Activated CD4-positive, alpha-beta T cell treated with anti-CD3 and anti-CD28 coated beads, Interleukin-2, amount 10 ng/mL, durations not matched to agents 24 days and 14 days (primary cell): ENCODE measurements at regions of chr11 and their contacts with region 1.

Region 1: DNA sequence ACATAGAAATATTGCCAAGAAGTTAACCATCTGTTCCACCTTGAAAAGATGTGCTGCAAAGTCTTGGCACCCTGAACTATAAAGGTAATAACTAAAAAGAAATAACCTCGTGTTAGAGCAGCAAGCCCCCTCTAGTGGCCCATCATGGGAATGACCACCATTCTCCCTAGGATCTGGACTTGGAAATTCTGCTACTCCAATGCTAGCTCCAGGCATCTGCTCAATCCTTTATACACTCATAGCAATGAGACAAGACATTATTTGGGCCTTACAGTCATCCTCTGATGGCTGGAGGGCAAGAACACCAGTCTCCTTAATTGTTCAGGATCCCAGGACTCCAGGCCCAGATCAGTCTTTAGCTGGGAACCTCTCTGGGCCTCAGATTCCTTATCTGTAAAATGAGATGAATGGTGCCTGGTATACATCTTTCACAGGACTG is 76.0 kb downstream of the CWC15 start:
- DNase-seq: peak; percentile 78
- H3K4me3 Mint-ChIP-seq: no peak overlapping the region
- H3K27ac Mint-ChIP-seq: no peak overlapping the region
- H3K4me1 Mint-ChIP-seq: no peaks in the 10 kb centered on the region
- H3K27me3 Mint-ChIP-seq: peaks cover 2% of the 10 kb centered on the region

Region 2: DNA sequence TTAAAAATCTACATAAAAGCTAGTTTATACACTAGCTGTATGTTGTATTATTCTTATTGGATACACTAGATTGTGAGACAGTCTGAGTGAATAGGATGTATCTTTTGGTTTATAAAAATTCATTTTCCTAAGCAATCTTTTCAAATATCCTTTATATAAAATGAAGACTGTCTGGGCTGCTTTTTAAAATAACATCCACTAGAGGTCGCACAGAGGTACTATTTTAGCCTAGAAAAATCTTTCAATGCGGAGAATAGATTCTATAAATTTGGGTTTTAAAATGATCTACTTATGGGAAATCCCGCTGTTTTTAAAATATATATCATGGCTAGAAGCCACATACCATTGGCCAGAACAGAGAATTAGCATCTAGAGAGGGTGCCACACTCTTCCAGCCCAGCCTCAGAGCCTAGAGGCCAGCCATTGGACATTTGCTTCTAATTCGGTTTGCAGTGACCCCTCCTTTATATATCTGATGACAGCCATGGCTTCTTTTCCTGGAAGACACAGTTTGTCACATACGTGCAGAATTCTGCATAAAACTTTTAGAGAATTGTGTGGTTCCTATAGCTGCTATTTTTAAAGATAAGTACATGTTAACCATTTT is 377.8 kb before region 1 on chr11:
- intact Hi-C with region 1: loop called (anchors 1 kb)
- DNase-seq: peak; percentile 67
- H3K4me3 Mint-ChIP-seq: no peak overlapping the region
- H3K27ac Mint-ChIP-seq: no peak overlapping the region
- H3K4me1 Mint-ChIP-seq: no peaks in the 10 kb centered on the region
- H3K27me3 Mint-ChIP-seq: peaks cover 31% of the 10 kb centered on the region

Region 3: DNA sequence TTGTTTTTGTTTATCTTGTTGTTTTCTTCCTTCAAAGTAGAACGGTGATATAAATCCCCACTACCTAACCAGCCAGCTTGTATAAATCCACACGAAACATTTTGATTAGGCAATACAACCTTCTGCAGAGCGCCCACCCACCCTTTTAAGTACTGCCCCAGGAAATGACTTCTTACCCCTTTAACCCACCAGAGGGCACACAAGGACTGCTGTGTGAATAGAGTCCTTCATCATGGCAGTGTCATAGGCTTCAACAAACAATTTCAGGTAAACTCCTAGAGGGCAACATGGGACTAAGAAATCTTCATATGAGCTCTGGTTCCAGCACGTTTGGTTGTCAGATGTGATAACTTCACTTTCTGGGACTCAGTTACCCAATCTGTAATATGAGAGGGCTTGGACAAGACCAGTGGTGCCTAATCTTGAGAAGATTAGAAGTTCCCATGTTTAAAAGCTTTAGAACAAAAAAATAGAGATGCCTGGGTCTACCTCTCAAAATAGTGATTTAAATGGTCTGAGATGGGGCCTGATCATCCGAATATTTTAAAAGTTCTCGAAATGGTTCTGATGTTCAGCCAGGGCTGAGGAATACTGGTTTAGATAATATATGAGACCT is 274.1 kb before region 1 on chr11:
- intact Hi-C with region 1: loop called (anchors 1 kb)
- DNase-seq: peak; percentile 86
- H3K4me3 Mint-ChIP-seq: no peak overlapping the region
- H3K27ac Mint-ChIP-seq: no peak overlapping the region
- H3K4me1 Mint-ChIP-seq: no peaks in the 10 kb centered on the region
- H3K27me3 Mint-ChIP-seq: peaks cover 3% of the 10 kb centered on the region

Region 4: DNA sequence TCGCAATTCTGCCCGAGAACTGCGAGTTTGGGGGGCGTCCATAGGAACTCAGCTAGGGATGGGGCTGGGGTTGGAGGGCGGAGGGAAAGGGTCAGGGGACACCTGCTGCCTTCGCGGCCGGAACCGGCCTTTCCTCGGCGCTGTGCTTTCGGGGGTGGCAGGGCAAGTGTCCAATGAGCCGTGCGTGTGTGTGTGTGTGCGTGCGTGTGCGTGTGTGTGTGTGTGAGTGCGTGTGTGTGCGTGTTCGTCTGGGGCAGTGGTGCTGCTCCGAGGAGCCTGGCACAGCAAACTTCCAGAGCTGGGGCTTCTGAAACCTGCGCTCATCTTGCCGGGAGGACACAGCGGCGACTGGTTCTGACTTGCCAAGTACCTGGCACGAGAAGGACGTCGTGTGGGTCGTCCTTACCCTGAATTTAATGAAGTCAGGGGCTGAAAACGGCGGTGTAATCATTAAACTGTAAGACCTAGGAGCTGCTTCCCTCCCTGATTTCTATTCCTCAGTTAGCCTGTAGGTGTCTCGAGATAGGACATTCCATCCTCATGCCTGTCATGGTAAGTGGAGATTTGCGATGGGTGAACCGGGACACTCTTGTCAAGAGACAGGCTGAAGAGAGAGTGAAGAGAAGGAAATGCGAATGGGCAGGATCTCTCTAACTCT is 156.2 kb before region 1 on chr11:
- intact Hi-C with region 1: loop called (anchors 5 kb)
- DNase-seq: peak; percentile 57
- H3K4me3 Mint-ChIP-seq: peak overlapping the region; percentile 79
- H3K27ac Mint-ChIP-seq: no peak overlapping the region
- H3K4me1 Mint-ChIP-seq: peaks cover 12% of the 10 kb centered on the region
- H3K27me3 Mint-ChIP-seq: peaks cover 37% of the 10 kb centered on the region

Region 5: DNA sequence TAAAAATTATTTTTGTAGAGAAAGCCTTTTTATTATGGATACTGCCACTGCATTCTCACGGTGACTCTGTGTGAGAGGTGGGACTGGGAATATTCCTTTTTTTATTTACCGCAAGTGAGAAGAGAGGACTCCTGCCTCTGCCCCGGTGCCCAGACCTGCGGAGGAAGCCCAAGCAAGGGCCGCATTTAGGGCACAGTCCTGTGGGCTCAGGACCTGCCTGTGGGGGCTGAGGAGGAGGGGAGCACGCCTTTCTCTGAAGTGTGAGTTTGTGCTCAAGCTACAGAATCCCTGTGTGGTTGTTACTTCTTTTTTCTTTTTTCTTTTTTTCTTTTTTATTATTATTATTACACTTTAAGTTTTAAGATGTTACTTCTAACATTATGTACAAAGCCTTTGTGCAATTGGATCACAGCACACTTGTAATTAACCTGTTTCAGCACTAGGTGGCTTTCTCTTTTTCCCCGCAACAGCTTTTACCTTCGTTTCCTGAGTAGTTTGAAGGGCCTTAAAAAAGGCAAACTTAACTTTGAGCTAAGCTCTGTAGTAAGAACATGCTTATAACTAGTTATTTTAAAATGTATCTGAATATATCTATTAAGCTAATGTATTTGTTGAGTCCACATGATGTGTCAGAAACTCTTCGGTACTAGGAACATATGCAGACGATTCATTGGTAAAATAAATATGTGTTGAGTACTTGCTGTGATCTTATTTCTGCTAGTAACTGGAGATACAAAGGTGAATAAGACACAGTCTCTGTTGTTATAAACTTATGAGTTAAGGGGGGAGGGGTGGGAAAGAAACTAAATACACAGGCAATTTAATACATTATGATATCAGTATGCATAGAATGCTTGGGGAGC is 110.9 kb before region 1 on chr11:
- intact Hi-C with region 1: loop called (anchors 1 kb)
- DNase-seq: peak; percentile 69
- H3K4me3 Mint-ChIP-seq: no peak overlapping the region
- H3K27ac Mint-ChIP-seq: no peak overlapping the region
- H3K4me1 Mint-ChIP-seq: no peaks in the 10 kb centered on the region
- H3K27me3 Mint-ChIP-seq: peaks cover 18% of the 10 kb centered on the region

Region 6: DNA sequence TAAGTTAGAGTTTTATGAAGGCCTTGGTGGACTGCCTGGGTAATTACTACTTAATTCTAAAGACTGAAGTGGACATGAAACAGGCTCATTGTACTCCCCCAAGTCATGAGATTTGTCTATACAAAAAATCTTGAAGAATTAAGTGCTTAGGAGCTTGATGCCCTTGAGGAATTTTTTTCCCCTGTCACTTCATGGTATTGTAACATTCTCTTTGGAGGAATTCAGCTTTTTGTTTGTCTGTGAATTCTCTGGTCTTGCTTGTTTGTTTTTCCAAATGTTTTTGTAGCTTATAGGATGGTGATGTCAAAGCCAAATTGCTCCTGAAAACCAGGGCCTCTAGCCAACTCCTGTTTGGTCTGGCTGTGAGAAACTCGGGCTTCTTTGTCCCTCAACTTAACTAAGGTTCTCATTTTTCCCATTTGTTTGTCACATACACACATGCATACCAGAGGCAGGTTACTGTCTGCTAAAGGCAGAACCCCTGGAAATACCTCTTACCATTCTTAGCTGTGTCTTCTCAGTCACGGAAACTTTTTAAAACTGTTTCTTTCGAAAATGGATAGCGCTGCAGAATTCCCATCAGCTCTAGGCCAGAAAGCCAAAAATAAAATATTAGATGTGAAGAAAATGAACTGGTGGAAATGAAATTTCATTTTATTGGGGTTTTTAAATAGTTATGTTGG is 62.3 kb before region 1 on chr11:
- intact Hi-C with region 1: loop called (anchors 5 kb)
- DNase-seq: no peak
- H3K4me3 Mint-ChIP-seq: no peak overlapping the region
- H3K27ac Mint-ChIP-seq: no peak overlapping the region
- H3K4me1 Mint-ChIP-seq: no peaks in the 10 kb centered on the region
- H3K27me3 Mint-ChIP-seq: no peaks in the 10 kb centered on the region

Region 7: DNA sequence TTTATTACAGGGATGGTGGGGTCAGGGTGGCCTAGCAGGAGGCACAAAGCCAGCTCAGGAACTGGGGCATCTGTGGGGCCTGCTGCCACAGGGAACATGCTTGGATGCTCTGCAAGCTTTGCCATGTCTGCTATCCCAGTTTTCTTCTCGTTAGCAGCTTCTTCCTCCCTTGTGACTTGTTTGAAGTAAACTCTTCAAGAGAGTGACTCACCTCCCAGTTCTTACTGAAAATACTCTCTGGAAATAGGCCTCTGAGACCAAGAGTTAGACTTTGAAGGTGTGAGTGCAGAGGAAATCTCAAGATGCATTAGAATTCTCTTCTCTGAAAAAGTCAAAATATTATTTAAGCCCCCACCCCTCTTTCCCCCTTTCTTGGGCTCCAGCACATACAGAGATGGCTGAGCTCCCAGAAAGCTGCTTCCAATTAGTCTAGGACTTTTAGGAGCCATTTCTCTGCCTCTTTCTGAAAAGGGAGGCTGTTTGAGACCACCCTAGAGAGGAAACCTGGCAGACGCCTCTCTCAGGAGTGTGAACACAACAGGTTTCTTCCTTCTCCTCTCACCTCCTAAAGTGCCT is 60.9 kb after region 1 on chr11:
- intact Hi-C with region 1: no loop called
- DNase-seq: peak; percentile 45
- H3K4me3 Mint-ChIP-seq: no peak overlapping the region
- H3K27ac Mint-ChIP-seq: no peak overlapping the region
- H3K4me1 Mint-ChIP-seq: no peaks in the 10 kb centered on the region
- H3K27me3 Mint-ChIP-seq: peaks cover 10% of the 10 kb centered on the region